ENCODE measurements at regions of chr18 and their contacts with region 1.

Region 1: DNA sequence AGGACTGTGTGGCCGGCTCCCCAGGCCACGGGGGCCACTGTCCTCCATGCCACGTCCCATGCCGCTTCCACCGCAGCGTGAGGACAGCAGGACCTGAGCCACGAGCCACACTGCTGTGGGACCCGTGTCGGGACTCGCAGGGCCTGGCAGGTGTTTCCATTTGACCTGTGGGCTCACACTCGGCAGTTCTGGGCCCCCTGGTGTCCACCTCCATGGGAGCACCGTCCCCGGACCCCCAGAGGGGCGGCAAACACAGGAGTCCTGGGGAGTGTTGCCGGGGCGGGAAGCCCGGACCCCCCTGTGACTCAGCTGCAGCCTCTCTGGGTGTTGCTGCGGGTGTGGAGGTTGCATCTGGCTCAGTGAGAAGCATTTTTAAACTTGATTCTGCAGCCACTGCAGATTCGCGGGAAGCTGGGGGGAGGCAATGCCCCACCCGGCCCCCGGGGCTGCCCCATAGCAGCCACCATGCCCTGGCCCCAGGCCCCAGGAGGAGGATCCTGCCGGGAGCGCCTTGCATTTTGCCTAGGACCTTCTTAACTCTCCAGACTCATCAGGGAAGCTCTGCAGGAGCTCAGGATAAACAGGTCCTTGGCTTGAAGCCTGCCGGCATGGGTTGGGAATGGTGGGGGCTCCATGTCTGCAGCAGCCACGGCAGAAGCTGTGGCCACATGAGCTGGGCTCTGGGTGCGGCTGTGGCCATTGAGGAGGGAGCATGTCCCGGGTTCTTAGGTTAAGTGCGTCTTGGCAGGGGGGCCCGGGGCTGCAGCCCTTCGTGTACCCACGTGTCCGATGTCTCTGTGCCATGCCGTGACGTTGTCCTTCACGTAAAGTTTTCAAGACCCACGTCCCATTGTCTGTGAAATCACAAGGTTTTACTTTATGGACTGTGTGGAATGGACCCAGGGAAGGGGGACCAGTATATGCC is 30.9 kb downstream of the NFATC1 start:
- DNase-seq: no peak
- ATAC-seq: no peak
- H3K4me3 ChIP-seq: no peak overlapping the region
- H3K27ac ChIP-seq: no peak overlapping the region
- H3K4me1 ChIP-seq: no peaks in the 10 kb centered on the region
- H3K27me3 ChIP-seq: no peaks in the 10 kb centered on the region
- CTCF ChIP-seq: no peak

Region 2: DNA sequence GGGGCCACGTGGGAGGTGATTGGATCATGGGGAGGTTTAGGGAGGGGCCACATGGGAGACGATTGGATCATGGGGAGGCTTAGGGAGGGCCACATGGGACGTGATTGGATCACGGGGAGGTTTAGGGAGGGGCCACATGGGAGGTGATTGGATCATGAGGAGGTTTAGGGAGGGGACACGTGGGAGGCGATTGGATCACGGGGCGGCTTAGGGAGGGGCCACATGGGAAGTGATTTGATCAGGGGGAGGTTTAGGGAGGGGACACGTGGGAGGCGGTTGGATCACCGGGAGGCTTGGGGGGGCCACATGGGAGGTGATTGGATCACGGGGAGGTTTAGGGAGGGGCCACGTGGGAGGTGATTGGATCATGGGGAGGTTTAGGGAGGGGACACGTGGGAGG is 469.5 kb before region 1 on chr18:
- CTCF ChIA-PET with region 1: no interaction called
- POLR2A ChIA-PET with region 1: interaction called, 29 read pairs
- intact Hi-C with region 1: no loop called
- DNase-seq: no peak
- ATAC-seq: no peak
- H3K4me3 ChIP-seq: no peak overlapping the region
- H3K27ac ChIP-seq: no peak overlapping the region
- H3K4me1 ChIP-seq: no peaks in the 10 kb centered on the region
- H3K27me3 ChIP-seq: peaks cover 25% of the 10 kb centered on the region
- CTCF ChIP-seq: no peak

Region 3: GRCh38 chr18:79248495-79249060 is 178.1 kb before region 1 on chr18:
- CTCF ChIA-PET with region 1: no interaction called
- POLR2A ChIA-PET with region 1: no interaction called
- intact Hi-C with region 1: no loop called
- DNase-seq: no peak
- ATAC-seq: no peak
- H3K4me3 ChIP-seq: no peak overlapping the region
- H3K27ac ChIP-seq: no peak overlapping the region
- H3K4me1 ChIP-seq: peaks cover 7% of the 10 kb centered on the region
- H3K27me3 ChIP-seq: no peaks in the 10 kb centered on the region
- CTCF ChIP-seq: no peak

Region 4: DNA sequence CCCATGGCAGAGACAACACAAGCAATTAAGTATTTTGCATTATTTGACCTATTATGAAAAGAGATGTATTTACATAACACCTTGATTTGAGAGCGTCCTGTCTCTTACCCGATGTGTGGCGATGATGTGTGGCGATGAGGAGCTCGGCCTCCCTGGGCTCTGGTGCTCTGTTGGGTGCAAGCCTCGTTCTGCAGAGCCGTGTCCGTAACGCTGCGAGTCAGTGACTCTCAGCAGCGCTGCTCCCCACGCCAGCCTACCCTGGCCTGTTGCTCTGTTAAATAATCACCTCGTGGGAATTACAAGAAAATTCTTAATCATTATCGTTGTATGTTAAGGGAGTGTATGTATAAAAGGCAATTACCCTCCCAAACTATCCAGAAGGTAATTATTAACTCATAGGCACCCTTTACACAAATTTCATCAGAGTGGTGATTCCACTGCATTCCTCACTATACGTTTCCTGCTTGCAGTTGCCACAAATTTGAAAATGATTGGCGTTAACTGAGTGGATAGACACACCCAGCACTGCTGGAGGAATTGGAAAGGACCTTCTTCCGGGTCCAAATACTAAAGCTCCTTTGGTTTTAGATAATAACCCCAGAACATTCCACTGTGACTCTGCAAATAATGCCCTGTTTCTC is 83.0 kb before region 1 on chr18:
- CTCF ChIA-PET with region 1: no interaction called
- POLR2A ChIA-PET with region 1: no interaction called
- intact Hi-C with region 1: no loop called
- DNase-seq: no peak
- ATAC-seq: no peak
- H3K4me3 ChIP-seq: no peak overlapping the region
- H3K27ac ChIP-seq: no peak overlapping the region
- H3K4me1 ChIP-seq: no peaks in the 10 kb centered on the region
- H3K27me3 ChIP-seq: no peaks in the 10 kb centered on the region
- CTCF ChIP-seq: no peak

Measured in PC-3 (cell line).